HepG2 (cell line): ENCODE measurements at regions of chr2 and their contacts with region 1.

Region 1: DNA sequence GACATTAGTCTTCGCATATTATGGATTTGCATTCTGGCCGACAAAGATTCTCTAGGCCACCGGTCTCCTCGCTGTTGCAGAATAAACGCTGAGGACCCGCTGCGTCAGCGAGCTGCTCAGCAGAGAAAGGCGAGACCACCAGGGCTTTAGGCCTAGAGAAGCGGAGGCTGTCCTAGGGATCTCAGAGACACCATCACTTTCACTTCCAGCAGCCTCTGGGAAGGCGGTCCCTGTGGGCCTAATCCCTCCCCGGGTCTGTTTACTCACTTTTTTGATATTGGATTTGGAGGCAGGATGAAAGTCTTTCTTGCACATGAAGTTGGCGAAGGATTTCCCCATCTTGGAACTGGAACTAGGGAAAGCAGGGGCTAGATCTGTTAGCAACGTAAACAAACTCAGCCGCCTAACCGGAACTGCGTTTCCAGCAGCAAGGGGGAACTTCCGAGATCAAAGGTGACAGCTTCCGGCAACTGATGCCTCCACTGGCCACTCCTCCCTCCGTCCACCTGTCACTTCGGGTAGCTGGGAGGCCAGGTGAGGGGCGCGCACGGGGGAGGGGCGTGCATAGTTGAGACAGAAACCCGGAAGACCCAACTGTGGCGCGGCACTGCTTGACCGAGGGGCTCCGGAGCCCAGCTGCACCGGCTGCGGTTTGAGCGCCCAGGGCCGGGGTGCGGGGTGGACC is at the start of gene SCRN3:
- DNase-seq: peak; percentile 94
- ATAC-seq: peak; percentile 97
- H3K4me3 ChIP-seq: peak within 1 kb of the TSS; percentile 95 to 98 (median 96)
- H3K27ac ChIP-seq: peak within 1 kb of the TSS; percentile 86
- H3K4me1 ChIP-seq: peaks cover 48% of the 10 kb centered on the region
- H3K27me3 ChIP-seq: peaks cover 0 to 4% of the 10 kb centered on the region in 2 experiments; a peak in 1 of 5 replicates
- CTCF ChIP-seq: no peak
- EP300 ChIP-seq: peak; percentile 10 to 61; a peak in 3 of 4 replicates
- POLR2A ChIP-seq: peak; percentile 82 to 92
- RAD21 ChIP-seq: no peak
- total RNA-seq, gene SCRN3: 11.3 and 16.8 TPM in 2 replicates

Region 2: DNA sequence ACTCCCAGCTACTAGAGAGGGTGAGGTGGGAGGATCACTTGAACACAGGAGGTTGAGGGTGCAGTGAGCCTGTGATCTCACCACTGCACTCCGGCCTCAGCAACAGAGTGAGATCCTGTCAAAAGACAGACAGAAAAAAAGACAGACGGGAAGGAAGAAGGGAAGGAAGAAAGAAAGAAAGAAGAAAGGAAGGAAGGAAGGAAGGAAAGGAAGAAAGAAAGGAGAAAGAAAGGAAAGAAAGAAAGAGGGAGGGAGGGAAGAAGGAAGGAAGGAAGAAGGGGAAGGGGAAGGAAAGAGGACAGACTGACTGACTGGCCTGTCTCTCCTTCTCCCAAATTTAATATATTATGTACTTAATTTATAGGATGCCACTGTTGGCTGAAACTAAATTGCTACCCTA is 39.1 kb before region 1 on chr2:
- CTCF ChIA-PET with region 1: no interaction called
- POLR2A ChIA-PET with region 1: no interaction called
- in situ Hi-C with region 1: no loop called
- intact Hi-C with region 1: no loop called
- DNase-seq: no peak
- ATAC-seq: no peak
- H3K4me3 ChIP-seq: no peak overlapping the region
- H3K27ac ChIP-seq: no peak overlapping the region
- H3K4me1 ChIP-seq: no peaks in the 10 kb centered on the region
- H3K27me3 ChIP-seq: no peaks in the 10 kb centered on the region
- CTCF ChIP-seq: no peak
- EP300 ChIP-seq: no peak
- POLR2A ChIP-seq: no peak
- RAD21 ChIP-seq: no peak

Region 3: GRCh38 chr2:174487108-174487819 is 91.8 kb after region 1 on chr2:
- CTCF ChIA-PET with region 1: no interaction called
- POLR2A ChIA-PET with region 1: interaction called, 13 read pairs
- in situ Hi-C with region 1: no loop called
- intact Hi-C with region 1: no loop called
- DNase-seq: peak; percentile 93
- ATAC-seq: peak; percentile 96
- H3K4me3 ChIP-seq: peak overlapping the region; percentile 62 to 87 (median 77)
- H3K27ac ChIP-seq: no peak overlapping the region
- H3K4me1 ChIP-seq: peaks cover 10% of the 10 kb centered on the region
- H3K27me3 ChIP-seq: peaks cover 7 to 14% of the 10 kb centered on the region in 2 experiments; a peak in 4 of 5 replicates
- CTCF ChIP-seq: no peak
- EP300 ChIP-seq: peak in 1 of 2 experiments; percentile 43; a peak in 1 of 4 replicates
- POLR2A ChIP-seq: peak in 1 of 2 experiments; percentile 71; a peak in 2 of 4 replicates
- RAD21 ChIP-seq: peak; percentile 27; the same call in 1 of the 2 replicates